Thyroid gland (tissue), 4 donors: ENCODE measurements at regions of chr1 and their contacts with region 1.

Region 1: DNA sequence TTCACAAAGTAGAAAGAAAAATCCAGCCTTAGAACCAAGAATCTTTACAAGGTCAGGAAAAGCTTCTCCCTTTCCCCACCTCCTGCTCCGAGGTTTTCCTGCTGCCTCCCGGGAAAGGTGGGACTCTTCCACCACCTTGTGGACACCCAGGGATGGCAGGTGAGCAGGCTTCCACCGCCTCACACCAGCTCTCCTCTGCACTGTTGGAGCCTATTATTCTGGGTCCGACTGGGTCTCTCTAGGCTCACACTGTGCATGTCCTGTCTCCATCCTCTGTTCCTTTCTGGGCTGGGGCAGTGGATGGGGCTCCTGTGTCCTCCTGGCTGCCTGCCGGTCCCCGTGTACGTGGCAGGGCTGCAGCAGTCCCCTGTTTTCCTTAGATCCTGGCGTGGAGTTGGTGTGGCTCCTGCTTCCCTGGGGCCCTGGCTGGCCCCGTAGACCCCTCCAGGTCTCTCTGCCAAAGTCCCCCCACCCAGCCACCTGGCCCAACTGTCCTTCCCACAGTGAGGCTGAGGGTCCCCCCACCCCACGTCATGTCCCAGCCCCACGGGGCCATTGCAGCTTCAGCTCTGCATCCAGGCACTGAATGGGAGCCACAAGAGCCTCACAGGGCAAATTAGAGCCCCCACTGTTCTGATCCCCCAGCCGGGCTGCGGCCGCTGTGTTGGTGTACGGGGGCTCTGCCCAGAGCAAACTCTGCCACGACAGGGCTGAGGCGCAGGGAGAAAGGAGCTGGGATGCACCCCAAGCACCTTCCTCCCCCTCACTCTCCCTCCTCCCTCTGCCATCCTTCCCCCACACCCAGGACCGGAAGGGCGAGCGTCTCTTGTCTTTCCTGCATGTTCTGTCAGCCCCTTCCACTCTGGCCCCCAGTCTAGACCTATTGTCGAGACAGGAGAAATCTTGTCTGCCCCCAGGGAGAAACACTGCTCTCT is 3.3 kb upstream of the SLC45A1 start:
- DNase-seq: peak; percentile 81 to 88
- H3K4me3 ChIP-seq: no peak overlapping the region
- H3K27ac ChIP-seq: no peak overlapping the region
- H3K4me1 ChIP-seq: peaks cover 9 to 33% of the 10 kb centered on the region in 2 donors
- H3K27me3 ChIP-seq: no peaks in the 10 kb centered on the region
- CTCF ChIP-seq: peak; percentile 78 to 99 (median 94)
- POLR2A ChIP-seq: no peak

Region 2: GRCh38 chr1:7983086-7983778 is 331.4 kb before region 1 on chr1:
- intact Hi-C with region 1: loop called (anchors 5 kb)
- DNase-seq: no peak
- H3K4me3 ChIP-seq: no peak overlapping the region
- H3K27ac ChIP-seq: no peak overlapping the region
- H3K4me1 ChIP-seq: peaks cover 12 to 18% of the 10 kb centered on the region in 2 donors
- H3K27me3 ChIP-seq: no peaks in the 10 kb centered on the region
- CTCF ChIP-seq: no peak
- POLR2A ChIP-seq: no peak